Adrenal gland (tissue), 19 donors: ENCODE measurements at regions of chr2 and their contacts with region 1.

Region 1: DNA sequence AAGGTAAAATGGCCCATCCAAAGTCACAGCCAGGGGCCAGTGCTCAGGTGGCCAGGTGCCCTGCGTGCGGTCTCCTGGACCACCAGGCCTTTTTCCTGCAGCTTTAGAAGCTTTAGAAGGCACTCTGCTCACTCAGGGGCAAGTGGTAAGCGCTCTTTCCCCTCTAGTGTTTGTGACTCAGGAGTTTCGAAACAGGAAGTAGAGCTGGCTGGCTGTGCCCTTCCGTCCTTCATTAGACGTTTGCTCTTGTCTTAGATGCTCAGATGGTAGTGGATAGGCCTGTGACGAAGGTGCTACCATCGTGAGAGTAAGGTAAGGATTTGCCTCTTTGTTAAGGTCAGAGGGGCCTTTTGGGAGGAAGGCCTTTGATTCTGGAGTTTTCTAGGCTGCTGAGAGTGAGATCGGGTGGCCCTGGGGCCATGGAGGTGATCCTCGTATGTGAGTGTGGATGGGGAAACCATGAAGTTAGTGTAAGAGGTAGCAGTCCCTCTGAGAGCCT is at the start of gene CASP8:
- DNase-seq: peak in 6 of 7 donors; percentile 29 to 64 (median 40)
- H3K4me3 ChIP-seq: peak within 1 kb of the TSS in 1 of 4 donors; percentile 54
- H3K27ac ChIP-seq: peak within 1 kb of the TSS in 3 of 5 donors; percentile 15 to 68 (median 60)
- H3K4me1 ChIP-seq: peaks cover 22 to 37% of the 10 kb centered on the region in 2 donors
- H3K27me3 ChIP-seq: no peaks in the 10 kb centered on the region
- CTCF ChIP-seq: no peak
- POLR2A ChIP-seq: peak in 1 of 2 donors; percentile 26
- total RNA-seq, gene CASP8: 9.1 to 55.8 (median 23.5) TPM

Region 2: GRCh38 chr2:201357241-201357640 is 96.9 kb after region 1 on chr2 and contains the start of gene FLACC1:
- intact Hi-C with region 1: loop called in 1 of 2 experiments (anchors 10 kb)
- DNase-seq: peak; percentile 44 to 82 (median 69)
- H3K4me3 ChIP-seq: no peak within 1 kb of the TSS
- H3K27ac ChIP-seq: peak within 1 kb of the TSS in 3 of 5 donors; percentile 30 to 63 (median 35)
- H3K4me1 ChIP-seq: no peaks in the 10 kb centered on the region
- H3K27me3 ChIP-seq: no peaks in the 10 kb centered on the region
- CTCF ChIP-seq: no peak
- POLR2A ChIP-seq: no peak
- total RNA-seq, gene FLACC1: 0.52 to 4.3 (median 1.9) TPM in 8 of 9 donors, not detected in the other

Region 3: DNA sequence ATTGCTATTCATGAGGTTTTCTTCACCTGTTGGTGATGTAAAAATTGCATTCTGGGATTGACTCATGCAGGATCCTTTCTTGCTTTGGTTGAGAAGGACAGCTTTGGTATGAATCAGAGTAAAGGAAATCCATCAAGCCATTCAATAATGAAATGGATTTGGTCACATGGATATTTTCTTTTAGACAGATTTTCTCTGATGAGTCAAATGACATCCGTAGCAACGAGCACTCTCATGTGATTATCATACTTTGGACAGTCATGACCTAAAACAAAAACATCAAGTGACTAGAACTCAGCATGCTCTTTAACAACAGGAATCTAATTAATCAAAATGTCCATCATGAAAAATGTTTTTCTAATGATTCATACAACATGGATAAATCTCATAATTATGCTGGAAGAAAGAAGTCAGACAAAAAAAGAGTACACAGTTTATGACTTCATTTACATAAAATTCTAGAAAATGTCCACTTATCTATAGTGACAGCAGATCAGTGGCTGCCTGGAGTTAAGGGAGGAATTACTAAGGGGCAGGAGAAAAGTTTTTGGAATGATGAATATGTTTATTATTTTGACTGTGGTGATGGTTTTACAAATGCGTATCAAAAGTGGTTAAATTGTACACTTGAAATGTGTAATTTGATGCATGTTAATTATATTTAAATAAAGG is 160.2 kb after region 1 on chr2:
- intact Hi-C with region 1: no loop called
- DNase-seq: no peak
- H3K4me3 ChIP-seq: no peak overlapping the region
- H3K27ac ChIP-seq: peak overlapping the region in 4 of 5 donors; percentile 42 to 81 (median 62)
- H3K4me1 ChIP-seq: peaks cover 6 to 57% of the 10 kb centered on the region in 2 donors
- H3K27me3 ChIP-seq: no peaks in the 10 kb centered on the region
- CTCF ChIP-seq: no peak
- POLR2A ChIP-seq: no peak